Psoas muscle (tissue), 8 donors: ENCODE measurements at regions of chr12 and their contacts with region 1.

Region 1: DNA sequence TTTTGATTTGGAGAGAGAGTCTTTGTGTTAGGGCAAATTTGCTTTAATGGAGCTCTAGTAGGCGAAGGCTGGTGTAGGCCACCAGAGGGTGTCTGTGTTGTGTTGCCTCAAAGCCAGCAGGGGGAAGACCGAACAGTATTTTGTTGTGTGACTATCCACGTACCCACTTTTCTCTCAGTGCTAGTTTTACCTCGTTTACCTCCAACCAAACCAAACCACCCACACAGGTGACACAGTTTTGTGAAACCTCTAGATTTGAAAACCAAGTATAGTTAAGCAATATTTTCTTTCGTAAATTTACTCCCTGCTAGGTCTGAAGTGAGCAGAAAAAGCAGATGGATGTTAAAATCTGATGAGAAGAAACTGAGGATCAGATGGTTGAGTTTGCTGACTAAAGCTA is 36.3 kb upstream of the NPFF start:
- DNase-seq: peak in 1 of 2 donors; percentile 31
- ATAC-seq: peak; percentile 87 to 95 (median 90)
- H3K4me3 ChIP-seq: no peak overlapping the region
- H3K27ac ChIP-seq: peak overlapping the region; percentile 43
- H3K4me1 ChIP-seq: peaks cover 5% of the 10 kb centered on the region
- H3K27me3 ChIP-seq: no peaks in the 10 kb centered on the region
- CTCF ChIP-seq: peak; percentile 83

Region 2: GRCh38 chr12:53746592-53747092 is 203.1 kb after region 1 on chr12:
- intact Hi-C with region 1: loop called in 1 of 2 experiments (anchors 1 kb)
- DNase-seq: peak; percentile 90 to 96
- ATAC-seq: peak; percentile 93 to 95 (median 94)
- H3K4me3 ChIP-seq: no peak overlapping the region
- H3K27ac ChIP-seq: no peak overlapping the region
- H3K4me1 ChIP-seq: peaks cover 13% of the 10 kb centered on the region
- H3K27me3 ChIP-seq: peaks cover 0 to 62% (median 15%) of the 10 kb centered on the region in 3 donors
- CTCF ChIP-seq: peak; percentile 100